ENCODE measurements at regions of chr2 and their contacts with region 1.

Region 1: DNA sequence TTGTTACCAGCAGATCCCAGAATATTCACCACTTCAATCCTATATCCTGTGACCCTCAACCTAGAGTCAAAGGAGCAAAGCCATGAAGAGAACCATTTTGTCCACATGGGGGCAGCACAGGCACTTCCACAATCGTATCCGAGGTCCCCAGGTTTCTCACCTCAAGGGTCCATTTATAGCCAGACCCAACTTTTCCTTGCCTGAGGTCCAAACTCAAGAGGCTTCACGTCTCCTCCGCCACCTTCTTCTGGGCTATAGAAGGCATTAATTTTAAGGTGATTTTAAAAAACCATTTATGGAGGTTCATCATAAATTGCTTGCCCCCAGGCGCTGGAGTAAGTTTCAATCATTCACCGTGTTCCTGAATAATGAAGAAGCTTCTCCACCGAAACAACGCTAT is 111.6 kb upstream of the NABP1 start:
- DNase-seq: peak; percentile 85
- ATAC-seq: peak; percentile 62
- H3K4me3 Mint-ChIP-seq: no peak overlapping the region
- H3K27ac Mint-ChIP-seq: no peak overlapping the region
- H3K4me1 Mint-ChIP-seq: peaks cover 21% of the 10 kb centered on the region
- H3K27me3 Mint-ChIP-seq: peaks cover 35% of the 10 kb centered on the region
- CTCF ChIP-seq: peak; percentile 75

Region 2: DNA sequence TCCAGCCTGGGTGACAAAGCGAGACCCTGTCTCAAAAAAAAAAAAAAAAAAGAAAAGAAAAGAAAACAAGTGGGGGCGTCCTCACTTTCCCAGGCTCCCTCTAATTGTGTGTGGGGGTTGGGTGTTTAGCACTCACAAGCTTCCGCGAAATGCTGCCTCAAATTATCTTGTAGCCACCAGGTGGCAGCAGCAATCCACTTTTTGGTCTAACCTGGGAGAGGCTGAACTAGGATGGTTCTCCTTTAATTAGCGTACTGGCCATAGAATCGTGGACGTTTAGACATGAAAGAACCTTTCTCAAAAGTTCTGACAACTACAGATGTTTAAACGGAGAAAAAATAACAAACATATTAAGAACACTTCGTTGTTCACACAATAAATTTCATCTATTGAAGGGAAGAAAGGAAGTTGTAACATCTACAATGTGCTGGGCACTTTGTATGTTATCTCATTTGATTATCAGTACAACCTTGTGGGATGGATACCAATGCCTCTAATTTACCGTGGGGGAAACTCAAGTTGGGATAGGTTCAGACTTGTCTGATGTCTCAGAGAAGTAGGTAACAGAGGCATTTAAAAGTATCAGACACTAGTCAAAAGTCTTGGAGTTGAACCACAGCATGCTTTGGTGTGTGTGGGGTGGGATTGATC is 11.1 kb before region 1 on chr2:
- CTCF ChIA-PET with region 1: interaction called, 27 read pairs
- POLR2A ChIA-PET with region 1: no interaction called
- intact Hi-C with region 1: no loop called
- DNase-seq: peak; percentile 89
- ATAC-seq: peak; percentile 94
- H3K4me3 Mint-ChIP-seq: no peak overlapping the region
- H3K27ac Mint-ChIP-seq: no peak overlapping the region
- H3K4me1 Mint-ChIP-seq: peaks cover 2% of the 10 kb centered on the region
- H3K27me3 Mint-ChIP-seq: peaks cover 9% of the 10 kb centered on the region
- CTCF ChIP-seq: peak; percentile 85

Region 3: DNA sequence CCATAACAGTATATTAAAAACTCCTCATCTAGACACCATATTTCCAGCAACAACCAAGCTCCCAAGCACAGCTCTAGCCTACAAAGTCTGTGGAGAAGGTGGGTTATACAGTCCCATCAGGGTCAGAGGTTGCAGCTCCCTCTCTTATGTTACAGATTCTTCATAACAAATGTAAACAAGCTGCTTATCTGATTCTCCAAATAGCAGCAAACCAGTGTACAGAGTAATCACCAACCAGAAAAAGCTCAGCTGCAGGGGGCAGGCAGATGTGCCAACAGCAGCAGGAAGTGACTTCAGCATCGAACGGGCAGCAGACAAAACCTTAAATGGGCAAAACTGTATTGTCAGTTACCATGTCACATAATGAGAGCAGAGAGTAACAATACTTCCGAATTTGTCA is 58.7 kb after region 1 on chr2:
- CTCF ChIA-PET with region 1: interaction called, 12 read pairs
- POLR2A ChIA-PET with region 1: no interaction called
- intact Hi-C with region 1: no loop called
- DNase-seq: peak; percentile 55
- ATAC-seq: peak; percentile 76
- H3K4me3 Mint-ChIP-seq: no peak overlapping the region
- H3K27ac Mint-ChIP-seq: peak overlapping the region; percentile 73
- H3K4me1 Mint-ChIP-seq: peaks cover 54% of the 10 kb centered on the region
- H3K27me3 Mint-ChIP-seq: no peaks in the 10 kb centered on the region
- CTCF ChIP-seq: no peak

Region 4: DNA sequence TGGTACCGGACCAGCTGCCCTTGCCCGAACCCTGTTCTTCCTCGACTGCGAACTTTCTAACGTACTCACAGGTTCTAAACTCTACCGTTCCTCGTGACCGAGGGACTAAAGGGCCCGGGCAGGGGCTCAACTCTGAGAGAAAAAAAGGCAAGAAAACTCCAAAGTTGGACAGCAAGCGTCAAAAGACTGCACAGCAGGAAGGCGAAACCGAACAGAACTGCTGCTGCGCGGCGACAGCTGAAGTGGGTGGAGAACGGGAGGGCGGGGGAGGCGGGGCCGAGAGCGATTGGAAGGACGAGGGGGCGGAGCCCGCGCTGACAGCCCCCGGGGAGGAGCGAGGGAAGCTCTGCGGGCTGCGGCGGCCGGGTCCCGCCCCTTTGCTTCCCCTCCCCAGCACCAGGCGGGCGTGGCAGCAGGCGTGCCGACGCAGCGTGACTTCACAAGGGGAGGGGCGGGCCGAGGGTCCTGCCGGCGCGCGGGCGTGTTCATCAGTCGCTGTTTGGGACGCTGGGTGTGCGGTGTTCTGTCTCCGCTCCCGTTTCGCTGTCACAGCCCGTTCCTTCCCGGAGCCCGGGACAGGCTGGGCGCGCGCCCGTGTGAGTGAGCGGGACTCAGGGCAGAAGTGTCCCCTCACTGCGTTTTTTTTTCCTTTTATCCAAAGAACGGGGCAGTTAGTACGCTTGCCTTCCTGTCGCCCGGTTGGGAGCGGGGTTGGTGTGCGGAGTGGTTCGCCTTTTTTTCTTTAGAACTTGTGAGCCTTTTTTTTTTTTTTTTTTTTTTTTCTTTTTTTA is 111.5 kb after region 1 on chr2 and contains the start of gene NABP1:
- CTCF ChIA-PET with region 1: interaction called, 29 read pairs
- POLR2A ChIA-PET with region 1: interaction called, 9 read pairs
- intact Hi-C with region 1: loop called (anchors 5 kb)
- DNase-seq: peak; percentile 99
- ATAC-seq: peak; percentile 87
- H3K4me3 Mint-ChIP-seq: peak within 1 kb of the TSS; percentile 100
- H3K27ac Mint-ChIP-seq: peak within 1 kb of the TSS; percentile 99
- H3K4me1 Mint-ChIP-seq: peaks cover 53% of the 10 kb centered on the region
- H3K27me3 Mint-ChIP-seq: no peaks in the 10 kb centered on the region
- CTCF ChIP-seq: no peak
- total RNA-seq, gene NABP1: 30.5 to 31.7 TPM

Region 5: DNA sequence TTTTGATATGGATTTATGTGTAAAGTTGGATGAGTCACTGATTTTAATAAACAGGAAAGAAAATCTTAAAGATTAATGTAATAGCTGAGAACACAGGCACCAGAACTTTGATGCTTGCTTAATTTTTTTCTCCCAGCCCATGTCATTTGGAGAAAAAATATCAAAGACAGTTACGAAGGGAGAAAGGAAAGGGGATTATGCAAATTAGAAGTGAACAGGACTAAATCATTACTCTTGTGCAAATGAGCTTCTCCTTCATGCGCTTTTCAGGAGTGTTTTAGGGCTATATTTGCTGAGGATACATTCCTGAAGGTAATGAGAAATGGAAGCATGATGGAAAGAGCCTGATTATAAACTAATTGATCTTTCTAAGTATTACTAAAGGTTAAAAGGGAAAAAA is 140.4 kb after region 1 on chr2:
- CTCF ChIA-PET with region 1: interaction called, 11 read pairs
- POLR2A ChIA-PET with region 1: no interaction called
- intact Hi-C with region 1: no loop called
- DNase-seq: no peak
- ATAC-seq: no peak
- H3K4me3 Mint-ChIP-seq: no peak overlapping the region
- H3K27ac Mint-ChIP-seq: no peak overlapping the region
- H3K4me1 Mint-ChIP-seq: no peaks in the 10 kb centered on the region
- H3K27me3 Mint-ChIP-seq: no peaks in the 10 kb centered on the region
- CTCF ChIP-seq: no peak

Measured in activated CD8-positive, alpha-beta T cell treated with anti-CD3 and anti-CD28 coated beads for 36 hours (primary cell).